ENCODE measurements at regions of chr20 and their contacts with region 1.

Region 1: DNA sequence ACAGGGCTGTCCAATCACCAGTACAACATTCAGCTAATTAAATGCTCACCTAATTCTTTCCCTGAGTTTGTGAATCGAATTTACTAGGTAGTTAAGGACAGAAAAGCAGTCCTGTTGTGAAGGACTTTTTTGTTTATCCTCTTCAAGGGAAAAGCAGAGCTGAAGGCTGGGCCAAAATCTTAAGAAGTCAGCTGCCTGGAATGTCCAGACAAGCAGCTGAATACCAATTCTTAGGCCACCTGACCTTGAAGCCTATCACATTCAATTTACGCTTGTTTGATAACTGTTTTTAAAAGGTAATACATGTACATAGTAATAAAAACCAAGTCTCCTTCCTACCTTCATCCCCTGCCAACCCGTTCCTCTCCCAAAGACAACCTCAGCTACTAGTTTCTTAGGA is 56.4 kb downstream of the UQCC1 start:
- DNase-seq: no peak
- ATAC-seq: no peak
- H3K4me3 ChIP-seq: no peak overlapping the region
- H3K27ac ChIP-seq: no peak overlapping the region
- H3K4me1 ChIP-seq: peaks cover 15% of the 10 kb centered on the region
- CTCF ChIP-seq: no peak
- EP300 ChIP-seq: no peak
- POLR2A ChIP-seq: no peak
- RAD21 ChIP-seq: no peak

Region 2: DNA sequence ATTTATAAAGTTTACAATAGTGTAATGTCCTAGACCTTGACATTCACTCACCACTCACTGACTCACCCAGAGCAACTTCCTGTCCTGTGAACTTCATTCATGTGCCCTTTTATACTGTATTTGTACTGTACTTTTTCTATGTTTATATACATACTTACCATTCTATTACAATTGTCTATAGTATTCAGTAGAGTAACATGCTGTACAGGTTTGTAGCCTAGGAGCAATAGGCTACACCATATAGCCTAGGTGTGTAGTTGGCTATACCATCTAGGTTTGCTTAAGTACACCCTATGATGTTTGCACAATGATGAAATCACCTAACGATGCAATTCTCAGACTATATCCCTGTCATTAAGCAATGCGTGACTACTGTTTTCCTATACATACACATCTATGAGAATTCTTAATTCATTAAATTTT is 225.7 kb before region 1 on chr20:
- CTCF ChIA-PET with region 1: no interaction called
- POLR2A ChIA-PET with region 1: no interaction called
- DNase-seq: peak in 1 of 2 experiments; percentile 56
- ATAC-seq: peak in 1 of 2 experiments; percentile 78; a peak in 3 of 6 replicates
- H3K4me3 ChIP-seq: no peak overlapping the region
- H3K27ac ChIP-seq: peak overlapping the region; percentile 52 to 70
- H3K4me1 ChIP-seq: peaks cover 28% of the 10 kb centered on the region
- CTCF ChIP-seq: no peak
- EP300 ChIP-seq: no peak
- POLR2A ChIP-seq: no peak
- RAD21 ChIP-seq: no peak

Region 3: GRCh38 chr20:35344354-35344837 is 11.0 kb before region 1 on chr20:
- CTCF ChIA-PET with region 1: interaction called, 15 read pairs
- POLR2A ChIA-PET with region 1: no interaction called
- DNase-seq: peak in 1 of 2 experiments; percentile 63
- ATAC-seq: peak; percentile 56 to 76; a peak in 5 of 6 replicates
- H3K4me3 ChIP-seq: no peak overlapping the region
- H3K27ac ChIP-seq: peak overlapping the region; percentile 7 to 60; a peak in 4 of 6 replicates
- H3K4me1 ChIP-seq: peaks cover 17% of the 10 kb centered on the region
- CTCF ChIP-seq: no peak
- EP300 ChIP-seq: no peak
- POLR2A ChIP-seq: no peak
- RAD21 ChIP-seq: no peak

Measured in A549 (cell line).